Colonic mucosa (tissue), 4 donors: ENCODE measurements at regions of chr19 and their contacts with region 1.

Region 1: DNA sequence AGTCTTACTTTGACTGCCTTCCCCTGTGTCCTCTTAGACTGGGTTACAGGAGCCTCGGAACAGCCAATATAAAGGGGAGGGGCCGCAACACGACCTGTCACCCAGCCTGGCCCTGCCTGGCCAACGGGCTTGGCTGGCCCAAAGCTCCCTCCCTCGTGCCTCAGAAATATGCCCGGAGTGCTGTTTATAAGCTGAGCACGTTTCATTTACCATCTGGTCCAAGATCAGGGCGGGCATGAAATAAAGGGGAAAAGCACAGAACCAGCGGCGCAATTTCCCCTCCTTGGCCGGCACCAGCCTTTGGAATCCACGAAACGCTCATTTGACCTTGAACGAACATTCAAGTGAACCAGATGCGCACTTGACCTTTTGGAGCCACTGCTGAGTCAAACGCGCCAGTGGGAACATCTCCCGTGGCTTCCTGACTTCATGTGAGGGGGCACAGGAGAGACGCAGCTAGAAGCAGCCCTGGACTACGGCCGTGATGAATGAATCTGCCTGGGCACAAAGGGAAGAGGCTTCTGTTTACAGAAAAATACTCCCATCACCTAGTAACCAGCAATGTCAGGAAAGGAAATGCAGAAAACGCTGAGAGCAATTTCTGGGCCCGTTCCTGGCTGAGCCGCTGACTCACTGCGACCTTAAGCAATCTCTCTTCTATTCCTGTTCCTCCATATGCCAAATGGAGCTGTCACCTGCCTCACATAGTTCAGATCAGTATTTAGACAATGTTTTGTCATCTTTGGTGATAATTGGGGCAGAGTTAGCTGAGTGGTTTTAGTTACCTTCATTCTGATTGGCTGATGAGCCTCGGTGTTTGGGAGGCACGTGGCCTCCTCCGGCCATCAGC is 53.3 kb downstream of the RFX2 start:
- DNase-seq: peak; percentile 65
- H3K4me3 ChIP-seq: no peak overlapping the region
- H3K27ac ChIP-seq: peak overlapping the region; percentile 78
- H3K4me1 ChIP-seq: peaks cover 18% of the 10 kb centered on the region
- H3K27me3 ChIP-seq: no peaks in the 10 kb centered on the region
- CTCF ChIP-seq: no peak

Region 2: DNA sequence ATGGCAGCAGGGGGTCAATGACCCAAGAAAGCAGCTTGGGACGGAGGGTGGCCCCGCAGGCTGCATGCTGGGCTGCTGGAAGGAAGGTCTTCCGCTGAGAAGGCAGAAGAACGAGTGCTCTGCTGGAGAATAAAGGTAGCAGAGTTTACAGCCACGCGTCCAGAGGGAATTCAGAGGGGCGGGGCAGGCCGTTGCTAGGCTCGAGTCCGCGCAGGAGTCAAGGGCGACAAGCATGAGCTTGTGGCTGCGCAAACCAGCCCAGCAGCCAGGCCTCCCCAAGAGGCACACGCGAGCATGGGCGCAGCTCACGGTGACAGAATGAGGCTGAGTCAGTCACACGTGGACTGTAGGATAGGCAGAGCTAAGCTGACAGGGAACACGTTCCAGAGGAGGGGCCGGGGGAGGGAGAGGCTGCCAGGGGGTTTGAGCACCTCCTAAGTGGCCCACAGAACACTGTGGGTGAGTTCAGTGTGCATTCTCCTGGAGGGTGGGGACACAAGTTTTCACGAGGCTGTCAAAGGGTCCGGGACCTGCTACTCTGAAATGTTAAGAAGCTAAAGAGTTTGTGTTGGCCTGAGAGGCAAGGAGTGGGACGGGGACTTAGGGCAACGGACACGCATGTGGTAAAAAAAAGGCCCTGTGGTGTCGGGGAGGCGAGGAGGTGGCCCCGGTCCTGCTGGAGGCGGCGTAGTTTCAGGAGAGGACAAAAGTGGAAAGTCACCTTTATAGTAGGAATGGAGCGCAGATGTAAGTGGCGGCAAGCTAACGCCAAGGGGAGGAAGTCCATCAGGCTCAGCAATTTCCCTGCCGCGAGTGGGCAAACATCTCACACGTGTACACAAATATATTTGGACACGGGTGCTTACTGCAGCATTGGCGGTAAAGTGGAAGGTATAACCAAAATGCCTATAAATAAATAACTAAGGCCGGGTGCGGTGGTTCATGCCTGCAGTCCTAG is 35.6 kb after region 1 on chr19:
- intact Hi-C with region 1: loop called (anchors 5 kb)
- DNase-seq: peak; percentile 89
- H3K4me3 ChIP-seq: peak overlapping the region; percentile 7
- H3K27ac ChIP-seq: peak overlapping the region; percentile 92
- H3K4me1 ChIP-seq: no peaks in the 10 kb centered on the region
- H3K27me3 ChIP-seq: no peaks in the 10 kb centered on the region
- CTCF ChIP-seq: no peak

Region 3: DNA sequence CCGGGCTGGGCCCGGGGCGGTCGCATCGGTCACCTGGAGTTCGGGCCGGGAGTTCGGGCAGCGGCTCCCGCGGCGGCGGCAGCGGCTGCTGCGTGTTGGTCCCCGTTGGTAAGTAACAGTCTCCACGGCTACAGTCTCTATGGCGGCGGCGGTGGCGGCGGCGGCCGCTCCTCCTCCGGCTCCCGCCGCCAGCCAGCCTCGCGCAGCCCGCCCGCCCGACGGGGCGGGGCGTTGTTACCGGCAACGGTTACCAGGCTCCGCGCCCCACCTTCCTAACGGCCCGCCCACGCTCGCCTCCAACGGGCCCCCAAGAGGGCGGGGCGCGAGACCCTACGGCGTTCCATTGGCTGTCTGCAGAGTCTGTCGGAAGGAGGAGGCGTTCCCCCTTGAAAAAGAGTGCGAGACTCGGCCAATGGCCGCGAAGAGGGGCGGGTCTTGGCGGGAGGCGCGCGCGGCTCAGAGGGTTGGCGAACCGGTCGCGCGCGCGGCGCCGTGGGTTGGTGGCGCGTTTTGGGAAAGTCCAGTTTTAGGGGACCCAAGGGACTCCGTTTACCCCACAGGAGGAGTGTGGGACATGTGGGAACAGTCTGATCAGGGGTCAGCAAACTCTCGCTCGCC is 53.4 kb after region 1 on chr19 and contains the start of gene RFX2:
- intact Hi-C with region 1: loop called (anchors 5 kb)
- DNase-seq: peak; percentile 99
- H3K4me3 ChIP-seq: peak within 1 kb of the TSS; percentile 57
- H3K27ac ChIP-seq: peak within 1 kb of the TSS; percentile 71
- H3K4me1 ChIP-seq: peaks cover 5% of the 10 kb centered on the region
- H3K27me3 ChIP-seq: no peaks in the 10 kb centered on the region
- CTCF ChIP-seq: no peak
- total RNA-seq, gene RFX2: 6.2 to 7.3 TPM